ENCODE measurements at regions of chr1 and their contacts with region 1.

Region 1: GRCh38 chr1:170531758-170532657 is at the start of gene GORAB:
- DNase-seq: peak; percentile 96 to 97
- ATAC-seq: peak; percentile 97
- H3K4me3 ChIP-seq: peak within 1 kb of the TSS; percentile 78 to 87
- H3K27ac ChIP-seq: peak within 1 kb of the TSS; percentile 83 to 97
- H3K4me1 ChIP-seq: peaks cover 0 to 5% of the 10 kb centered on the region in 2 donors
- H3K27me3 ChIP-seq: no peaks in the 10 kb centered on the region
- total RNA-seq, gene GORAB: 16.1 to 18.4 TPM

Region 2: GRCh38 chr1:169893494-169894362 is 638.3 kb before region 1 on chr1 and contains the start of gene SCYL3:
- intact Hi-C with region 1: no loop called
- DNase-seq: peak; percentile 95 to 96
- ATAC-seq: peak; percentile 99
- H3K4me3 ChIP-seq: peak within 1 kb of the TSS; percentile 84 to 91
- H3K27ac ChIP-seq: peak within 1 kb of the TSS; percentile 68 to 96
- H3K4me1 ChIP-seq: peaks cover 0 to 6% of the 10 kb centered on the region in 2 donors
- H3K27me3 ChIP-seq: no peaks in the 10 kb centered on the region
- total RNA-seq, gene SCYL3: 7.5 to 11.9 TPM

Region 3: GRCh38 chr1:169933984-169934725 is 597.9 kb before region 1 on chr1:
- intact Hi-C with region 1: loop called in 1 of 2 experiments (anchors 10 kb)
- DNase-seq: no peak
- ATAC-seq: no peak
- H3K4me3 ChIP-seq: no peak overlapping the region
- H3K27ac ChIP-seq: no peak overlapping the region
- H3K4me1 ChIP-seq: peaks cover 0 to 2% of the 10 kb centered on the region in 2 donors
- H3K27me3 ChIP-seq: no peaks in the 10 kb centered on the region

Region 4: GRCh38 chr1:170214117-170215032 is 317.6 kb before region 1 on chr1:
- intact Hi-C with region 1: loop called in 1 of 2 experiments (anchors 10 kb)
- DNase-seq: peak in 1 of 2 donors; percentile 53
- ATAC-seq: peak; percentile 62
- H3K4me3 ChIP-seq: no peak overlapping the region
- H3K27ac ChIP-seq: peak overlapping the region; percentile 88 to 98
- H3K4me1 ChIP-seq: peaks cover 8 to 10% of the 10 kb centered on the region in 2 donors
- H3K27me3 ChIP-seq: no peaks in the 10 kb centered on the region

Region 5: DNA sequence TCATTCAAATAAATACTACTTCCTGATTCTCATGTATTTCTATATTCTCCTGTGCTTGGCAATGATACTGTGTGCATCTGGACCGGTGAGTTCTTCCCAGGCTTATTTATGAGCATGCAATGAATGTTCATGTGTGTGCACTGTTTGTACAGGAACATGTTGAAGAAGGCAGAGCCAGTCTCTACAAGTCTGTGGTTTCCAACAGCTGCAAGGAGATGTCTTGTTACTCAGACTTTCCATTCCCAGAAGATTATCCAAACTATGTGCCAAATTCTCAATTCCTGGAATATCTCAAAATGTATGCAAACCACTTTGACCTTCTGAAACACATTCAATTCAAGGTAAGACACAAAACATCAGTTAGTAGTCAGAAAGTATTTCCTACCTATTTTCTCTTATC is 735.4 kb after region 1 on chr1:
- intact Hi-C with region 1: no loop called
- DNase-seq: no peak
- ATAC-seq: no peak
- H3K4me3 ChIP-seq: no peak overlapping the region
- H3K27ac ChIP-seq: no peak overlapping the region
- H3K4me1 ChIP-seq: no peaks in the 10 kb centered on the region
- H3K27me3 ChIP-seq: no peaks in the 10 kb centered on the region